ENCODE measurements at regions of chr3 and their contacts with region 1.

Region 1: GRCh38 chr3:152281133-152281713 is 12.5 kb downstream of the MBNL1 start:
- DNase-seq: no peak
- ATAC-seq: peak; percentile 68
- H3K4me3 ChIP-seq: peak overlapping the region; percentile 33; the same call in 1 of the 2 replicates
- H3K27ac ChIP-seq: peak overlapping the region; percentile 64
- H3K4me1 ChIP-seq: peaks cover 43% of the 10 kb centered on the region
- H3K27me3 ChIP-seq: no peaks in the 10 kb centered on the region
- CTCF ChIP-seq: no peak
- EP300 ChIP-seq: no peak
- POLR2A ChIP-seq: no peak
- RAD21 ChIP-seq: no peak

Region 2: DNA sequence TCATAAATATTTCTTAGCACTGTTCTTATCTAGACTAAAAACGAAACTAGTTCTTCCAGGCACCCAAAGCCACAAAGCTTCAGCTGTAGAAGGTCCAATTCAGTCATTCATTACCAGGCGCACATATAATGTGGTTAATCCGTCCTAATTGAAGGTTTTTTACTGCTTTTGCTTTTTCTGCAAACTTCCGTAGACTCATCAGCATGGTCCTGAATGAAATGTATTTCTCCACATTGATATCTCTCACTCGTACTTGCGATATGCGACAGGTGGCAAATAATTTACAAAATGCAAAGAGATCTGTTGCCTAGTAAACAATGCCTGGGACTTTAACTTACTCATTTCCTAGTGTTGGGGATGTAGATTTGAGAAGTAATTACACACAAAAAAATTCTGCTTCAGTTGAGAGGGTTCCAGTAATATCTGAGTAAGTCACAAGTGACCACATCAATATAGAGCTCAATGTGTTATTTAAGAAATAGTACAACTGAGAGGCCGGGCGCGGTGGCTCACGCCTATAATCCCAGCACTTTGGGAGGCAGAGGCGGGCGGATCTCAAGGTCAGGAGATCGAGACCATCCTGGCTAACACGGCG is 87.5 kb before region 1 on chr3:
- CTCF ChIA-PET with region 1: interaction called, 3 read pairs
- POLR2A ChIA-PET with region 1: interaction called, 3 read pairs
- RAD21 ChIA-PET with region 1: interaction called, 7 read pairs
- SMC1A ChIA-PET with region 1: interaction called, 10 read pairs
- in situ Hi-C with region 1: no loop called
- intact Hi-C with region 1: no loop called
- DNase-seq: no peak
- ATAC-seq: peak; percentile 67
- H3K4me3 ChIP-seq: peak overlapping the region; percentile 44; the same call in 1 of the 2 replicates
- H3K27ac ChIP-seq: peak overlapping the region; percentile 48; the same call in 1 of the 2 replicates
- H3K4me1 ChIP-seq: peaks cover 29% of the 10 kb centered on the region
- H3K27me3 ChIP-seq: no peaks in the 10 kb centered on the region
- CTCF ChIP-seq: no peak
- EP300 ChIP-seq: no peak
- POLR2A ChIP-seq: no peak
- RAD21 ChIP-seq: no peak; the same call in 1 of the 2 replicates

Region 3: GRCh38 chr3:152258448-152259393 is 22.5 kb before region 1 on chr3:
- CTCF ChIA-PET with region 1: no interaction called
- POLR2A ChIA-PET with region 1: interaction called, 4 read pairs
- RAD21 ChIA-PET with region 1: interaction called, 5 read pairs
- SMC1A ChIA-PET with region 1: interaction called, 30 read pairs
- in situ Hi-C with region 1: no loop called
- intact Hi-C with region 1: no loop called
- DNase-seq: no peak
- ATAC-seq: peak; percentile 75
- H3K4me3 ChIP-seq: no peak overlapping the region; the same call in 1 of the 2 replicates
- H3K27ac ChIP-seq: peak overlapping the region; percentile 11; the same call in 1 of the 2 replicates
- H3K4me1 ChIP-seq: peaks cover 27% of the 10 kb centered on the region
- H3K27me3 ChIP-seq: no peaks in the 10 kb centered on the region
- CTCF ChIP-seq: no peak
- EP300 ChIP-seq: no peak
- POLR2A ChIP-seq: no peak
- RAD21 ChIP-seq: no peak

Region 4: DNA sequence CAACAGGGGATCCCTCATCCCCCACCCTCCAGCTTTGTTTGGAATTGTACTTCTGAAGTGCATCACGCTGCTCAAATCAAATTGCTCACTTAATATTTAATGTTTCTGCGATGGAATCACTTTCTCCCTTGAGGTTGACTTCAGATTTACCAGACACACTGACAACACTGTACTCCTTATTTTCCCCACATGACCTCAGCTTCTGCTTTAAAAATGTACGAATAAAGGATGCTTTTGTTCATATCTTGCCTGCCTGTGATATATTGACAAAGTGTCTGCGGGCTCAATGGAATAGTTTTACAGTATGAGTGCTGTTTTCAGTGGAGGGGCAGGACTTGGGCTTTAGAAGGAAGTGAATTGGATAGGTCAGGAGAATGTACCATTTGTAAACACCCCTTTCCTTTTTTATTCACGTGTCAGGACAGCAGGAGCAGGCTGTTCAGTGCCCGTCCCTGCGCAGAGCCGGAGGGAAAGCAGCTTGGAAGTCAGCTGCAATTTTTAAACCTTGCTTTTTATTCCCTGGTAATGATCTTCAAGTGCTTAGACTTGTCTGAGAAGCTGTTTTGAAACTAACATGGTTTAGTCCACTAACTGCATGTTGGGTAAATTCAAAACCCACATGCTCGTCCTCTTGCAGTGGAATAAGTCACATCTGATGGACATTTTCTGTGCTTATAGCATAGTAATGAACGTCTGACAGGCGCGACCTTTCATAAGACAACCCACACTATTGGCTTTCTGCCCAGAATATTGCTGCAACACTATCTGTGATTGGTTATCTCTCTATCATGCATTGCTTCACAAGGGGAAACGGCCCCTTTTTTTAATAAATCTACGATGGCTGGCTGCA is 17.4 kb after region 1 on chr3:
- CTCF ChIA-PET with region 1: interaction called, 34 read pairs
- POLR2A ChIA-PET with region 1: interaction called, 24 read pairs
- RAD21 ChIA-PET with region 1: interaction called, 26 read pairs
- SMC1A ChIA-PET with region 1: interaction called, 115 read pairs
- in situ Hi-C with region 1: no loop called
- intact Hi-C with region 1: no loop called
- DNase-seq: peak; percentile 74
- ATAC-seq: peak; percentile 71
- H3K4me3 ChIP-seq: peak overlapping the region; percentile 8
- H3K27ac ChIP-seq: peak overlapping the region; percentile 56
- H3K4me1 ChIP-seq: peaks cover 40% of the 10 kb centered on the region
- H3K27me3 ChIP-seq: no peaks in the 10 kb centered on the region
- CTCF ChIP-seq: no peak
- EP300 ChIP-seq: no peak
- POLR2A ChIP-seq: no peak
- RAD21 ChIP-seq: no peak

Region 5: DNA sequence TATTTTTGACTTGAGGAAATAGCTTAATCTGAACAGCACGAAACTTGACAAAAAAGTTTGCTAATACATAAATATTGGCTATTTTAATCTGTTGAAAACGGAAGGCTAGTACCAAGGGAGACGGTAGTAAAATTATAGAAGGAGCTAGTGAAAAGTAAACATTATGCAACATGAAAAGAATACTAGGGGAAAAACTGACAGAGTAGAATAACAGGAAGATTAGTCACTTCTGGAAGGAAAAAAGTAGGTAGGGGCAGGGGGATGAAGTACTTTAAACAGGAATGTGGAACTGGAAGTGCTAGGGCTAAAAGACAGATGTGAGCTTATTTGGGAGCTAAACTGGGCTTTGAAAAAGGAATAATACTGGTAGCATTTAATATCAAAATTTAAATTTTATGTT is 47.6 kb after region 1 on chr3:
- CTCF ChIA-PET with region 1: interaction called, 4 read pairs
- POLR2A ChIA-PET with region 1: interaction called, 4 read pairs
- RAD21 ChIA-PET with region 1: interaction called, 9 read pairs
- SMC1A ChIA-PET with region 1: interaction called, 16 read pairs
- in situ Hi-C with region 1: no loop called
- intact Hi-C with region 1: no loop called
- DNase-seq: no peak
- ATAC-seq: no peak
- H3K4me3 ChIP-seq: no peak overlapping the region
- H3K27ac ChIP-seq: no peak overlapping the region; the same call in 1 of the 2 replicates
- H3K4me1 ChIP-seq: peaks cover 24% of the 10 kb centered on the region
- H3K27me3 ChIP-seq: no peaks in the 10 kb centered on the region
- CTCF ChIP-seq: no peak
- EP300 ChIP-seq: no peak
- POLR2A ChIP-seq: no peak
- RAD21 ChIP-seq: no peak

Region 6: DNA sequence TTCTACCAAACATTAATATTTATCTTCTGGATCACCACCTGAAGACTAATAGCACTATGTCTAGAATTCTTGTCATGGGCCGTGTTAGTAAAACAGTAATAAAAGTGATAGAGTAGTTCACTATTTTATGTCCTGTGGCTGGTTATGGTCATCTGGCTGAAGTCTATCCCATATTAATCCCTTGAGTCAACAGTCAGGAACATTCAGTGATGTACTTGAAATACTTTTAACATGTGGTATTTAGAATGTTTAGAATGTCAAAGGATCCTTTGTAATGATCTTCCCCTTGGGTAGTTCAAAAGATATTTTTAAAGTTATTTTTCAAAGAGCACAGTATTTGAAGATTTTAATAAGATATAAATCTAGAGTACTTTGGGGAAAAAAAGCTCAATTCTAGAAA is 104.5 kb after region 1 on chr3:
- CTCF ChIA-PET with region 1: no interaction called
- POLR2A ChIA-PET with region 1: interaction called, 3 read pairs
- RAD21 ChIA-PET with region 1: interaction called, 4 read pairs
- SMC1A ChIA-PET with region 1: interaction called, 10 read pairs
- in situ Hi-C with region 1: no loop called
- intact Hi-C with region 1: no loop called
- DNase-seq: no peak
- ATAC-seq: no peak
- H3K4me3 ChIP-seq: no peak overlapping the region
- H3K27ac ChIP-seq: peak overlapping the region; percentile 13; the same call in 1 of the 2 replicates
- H3K4me1 ChIP-seq: peaks cover 6% of the 10 kb centered on the region; the same call in 1 of the 2 replicates
- H3K27me3 ChIP-seq: no peaks in the 10 kb centered on the region
- CTCF ChIP-seq: no peak
- EP300 ChIP-seq: no peak
- POLR2A ChIP-seq: no peak
- RAD21 ChIP-seq: no peak

Measured in GM12878 (cell line).